ENCODE measurements at regions of chr3 and their contacts with region 1.

Region 1: GRCh38 chr3:119716998-119717397 is 14.2 kb downstream of the CFAP91 start:
- DNase-seq: no peak
- ATAC-seq: no peak
- H3K4me3 ChIP-seq: no peak overlapping the region
- H3K27ac ChIP-seq: no peak overlapping the region
- H3K4me1 ChIP-seq: no peaks in the 10 kb centered on the region
- H3K27me3 ChIP-seq: peaks cover 1% of the 10 kb centered on the region
- CTCF ChIP-seq: no peak
- POLR2A ChIP-seq: no peak
- RAD21 ChIP-seq: no peak

Region 2: DNA sequence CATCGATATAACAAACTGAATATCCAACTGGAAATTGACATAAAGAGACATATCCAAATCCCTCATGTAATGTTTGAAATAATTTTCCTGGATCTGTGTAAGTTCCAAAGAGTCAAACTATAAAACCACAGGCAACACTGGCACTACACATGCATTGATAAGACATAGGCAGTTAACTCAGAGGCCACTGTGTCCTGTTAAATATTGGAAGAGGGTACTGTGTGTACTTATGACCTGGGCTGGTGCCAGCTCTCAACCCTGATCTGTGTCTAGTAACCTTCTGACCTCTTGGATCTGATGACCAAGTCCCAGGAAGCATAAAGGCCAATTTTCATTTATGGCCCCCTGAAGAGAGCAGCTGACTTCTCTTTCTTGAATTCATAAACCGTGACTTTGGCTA is 69.4 kb after region 1 on chr3:
- CTCF ChIA-PET with region 1: no interaction called
- POLR2A ChIA-PET with region 1: no interaction called
- dilution Hi-C with region 1: no loop called
- in situ Hi-C with region 1: no loop called
- intact Hi-C with region 1: loop called (anchors 5 kb)
- DNase-seq: no peak
- ATAC-seq: no peak
- H3K4me3 ChIP-seq: no peak overlapping the region
- H3K27ac ChIP-seq: no peak overlapping the region
- H3K4me1 ChIP-seq: no peaks in the 10 kb centered on the region
- H3K27me3 ChIP-seq: peaks cover 6% of the 10 kb centered on the region
- CTCF ChIP-seq: no peak
- POLR2A ChIP-seq: no peak
- RAD21 ChIP-seq: no peak

Measured in IMR-90 (cell line).